SK-N-SH (cell line): ENCODE measurements at regions of chr14 and their contacts with region 1.

Region 1: DNA sequence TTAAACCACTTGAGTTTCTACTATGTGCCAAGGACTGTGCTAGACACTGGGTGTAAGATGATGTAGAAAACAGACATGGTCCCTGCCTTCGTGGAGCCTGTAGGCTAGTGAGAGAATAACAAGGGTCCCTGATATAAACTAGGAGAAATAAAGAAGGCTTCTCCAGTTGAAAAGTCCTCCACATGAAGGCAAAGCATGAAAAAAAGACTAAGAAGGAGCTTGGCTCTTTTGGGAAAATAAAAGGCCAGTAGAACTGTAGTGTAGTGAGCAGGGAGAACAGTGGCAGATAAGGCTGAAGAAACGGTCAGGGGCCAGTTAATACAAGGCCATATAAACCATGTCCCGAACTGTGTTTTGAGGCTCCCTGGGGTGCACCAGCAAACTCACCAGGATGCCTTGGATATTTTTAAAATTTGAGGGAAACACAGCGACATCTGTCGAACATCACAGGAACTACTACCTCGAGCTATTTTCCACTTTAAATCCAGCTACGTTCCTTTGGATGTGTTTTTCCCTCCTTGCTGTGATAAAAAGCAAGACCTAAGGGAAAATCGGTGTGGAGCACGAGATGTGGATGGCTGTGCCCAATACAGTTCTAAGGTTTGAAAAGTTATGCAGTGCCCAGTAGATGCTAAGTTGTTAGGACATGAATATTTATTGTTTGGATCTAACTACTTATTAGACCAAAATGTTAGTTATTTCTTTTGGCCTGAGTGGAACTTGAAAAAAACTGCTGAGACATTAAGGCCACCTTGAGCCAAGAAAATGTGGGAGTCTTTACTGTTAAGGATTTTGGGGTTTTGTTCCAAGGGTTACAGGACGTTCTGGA is 8.5 kb upstream of the CFL2 start:
- DNase-seq: peak; percentile 74
- H3K4me3 ChIP-seq: peak overlapping the region in 1 of 2 experiments; percentile 15; a peak in 1 of 4 replicates
- H3K27ac ChIP-seq: no peak overlapping the region
- H3K4me1 ChIP-seq: peaks cover 0 to 5% of the 10 kb centered on the region in 2 experiments; a peak in 2 of 4 replicates
- H3K27me3 ChIP-seq: no peaks in the 10 kb centered on the region
- CTCF ChIP-seq: peak; percentile 77
- EP300 ChIP-seq: no peak
- RAD21 ChIP-seq: peak; percentile 81

Region 2: DNA sequence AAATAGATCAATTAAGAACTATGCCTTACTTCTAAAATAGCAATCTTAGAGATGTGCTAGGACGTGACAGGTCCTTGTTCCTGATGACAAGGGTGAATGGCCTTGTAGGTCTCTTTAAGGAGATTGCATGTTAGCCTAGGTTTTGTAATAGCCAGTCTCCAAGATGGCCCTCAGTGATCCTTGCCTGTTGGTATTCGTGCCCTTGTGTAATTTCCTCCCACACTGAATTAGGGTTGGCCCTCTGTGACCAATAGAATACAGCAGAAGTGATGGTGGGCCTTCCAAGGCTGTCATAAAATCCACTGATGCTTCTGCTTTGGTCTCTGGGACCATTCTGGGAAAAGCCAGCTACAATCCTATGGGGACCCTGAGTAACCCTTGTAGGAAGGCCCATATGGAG is 54.8 kb before region 1 on chr14:
- CTCF ChIA-PET with region 1: interaction called, 107 read pairs
- POLR2A ChIA-PET with region 1: no interaction called
- DNase-seq: no peak
- H3K4me3 ChIP-seq: no peak overlapping the region
- H3K27ac ChIP-seq: no peak overlapping the region
- H3K4me1 ChIP-seq: peaks cover 0 to 19% of the 10 kb centered on the region in 2 experiments; a peak in 3 of 4 replicates
- H3K27me3 ChIP-seq: no peaks in the 10 kb centered on the region
- CTCF ChIP-seq: no peak
- EP300 ChIP-seq: no peak
- RAD21 ChIP-seq: no peak

Region 3: DNA sequence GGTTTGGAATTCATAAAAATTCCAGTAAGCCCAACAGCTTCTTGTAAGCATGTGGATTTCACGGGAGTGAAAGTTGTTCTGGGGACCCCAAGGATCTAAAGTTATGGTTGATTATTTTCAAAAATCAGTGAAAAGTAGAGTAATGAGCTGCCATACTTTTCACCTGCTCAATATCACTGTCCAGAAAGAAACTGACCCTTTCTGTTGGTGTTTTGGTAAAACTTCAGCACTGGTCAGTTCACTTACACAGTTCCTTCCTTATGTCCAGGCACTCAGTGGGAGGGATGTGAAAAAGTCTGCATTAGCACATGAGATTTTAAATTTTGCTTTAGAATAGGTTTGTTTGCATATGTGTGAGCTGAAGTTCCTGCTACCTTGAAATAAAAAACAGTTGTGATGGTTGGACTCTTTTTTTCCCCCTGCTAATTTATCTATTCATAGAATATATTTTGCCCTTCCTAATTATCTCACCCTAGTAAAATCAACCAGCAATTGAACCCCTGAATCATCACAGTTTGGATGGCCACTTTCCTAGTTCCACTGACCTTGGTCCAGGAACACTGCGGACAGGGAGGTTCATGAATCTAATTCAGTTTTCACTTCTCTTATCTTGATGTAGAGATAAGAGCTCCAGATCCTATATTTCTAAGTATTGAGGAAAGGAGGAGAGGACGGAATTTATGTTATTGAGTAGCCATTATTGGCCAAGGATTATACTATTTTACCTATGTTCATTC is 34.3 kb before region 1 on chr14:
- CTCF ChIA-PET with region 1: interaction called, 24 read pairs
- POLR2A ChIA-PET with region 1: interaction called, 4 read pairs
- DNase-seq: no peak
- H3K4me3 ChIP-seq: no peak overlapping the region
- H3K27ac ChIP-seq: no peak overlapping the region
- H3K4me1 ChIP-seq: 0 out of 4 replicates have a peak, but pooled peaks cover 0 to under 1% of the 10 kb centered on the region in 2 experiments
- H3K27me3 ChIP-seq: no peaks in the 10 kb centered on the region
- CTCF ChIP-seq: no peak
- EP300 ChIP-seq: no peak
- RAD21 ChIP-seq: no peak

Region 4: GRCh38 chr14:34707722-34708121 is 15.2 kb before region 1 on chr14:
- CTCF ChIA-PET with region 1: interaction called, 56 read pairs
- POLR2A ChIA-PET with region 1: no interaction called
- DNase-seq: no peak
- H3K4me3 ChIP-seq: no peak overlapping the region
- H3K27ac ChIP-seq: 0 out of 4 replicates have a peak overlapping the region, but pooled peaks of 1 of the 2 experiments have one; percentile 19
- H3K4me1 ChIP-seq: peaks cover 22 to 24% of the 10 kb centered on the region in 2 experiments; a peak in 3 of 4 replicates
- H3K27me3 ChIP-seq: no peaks in the 10 kb centered on the region
- CTCF ChIP-seq: no peak
- EP300 ChIP-seq: no peak
- RAD21 ChIP-seq: no peak

Region 5: DNA sequence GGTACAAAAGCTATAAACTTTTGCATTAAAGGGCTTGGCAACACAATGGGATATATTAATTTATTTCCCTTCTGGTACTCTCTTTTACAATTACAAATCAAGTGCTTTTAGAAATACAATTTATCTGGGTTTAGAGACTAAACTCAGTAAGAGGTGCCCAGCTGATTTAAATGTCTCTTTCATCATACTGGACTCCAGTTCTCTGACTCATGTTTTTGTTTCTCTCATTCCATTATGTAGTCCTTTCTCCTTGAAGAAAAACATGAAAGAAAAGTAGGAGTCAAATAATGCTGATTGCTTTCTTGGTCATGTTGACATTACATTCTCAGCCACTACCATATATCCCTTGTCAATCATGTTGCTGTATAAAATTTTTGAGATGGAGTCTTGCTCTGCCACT is 27.7 kb after region 1 on chr14:
- CTCF ChIA-PET with region 1: interaction called, 14 read pairs
- POLR2A ChIA-PET with region 1: no interaction called
- DNase-seq: no peak
- H3K4me3 ChIP-seq: no peak overlapping the region
- H3K27ac ChIP-seq: peak overlapping the region in 1 of 2 experiments; percentile 53; a peak in 2 of 4 replicates
- H3K4me1 ChIP-seq: no peaks in the 10 kb centered on the region
- H3K27me3 ChIP-seq: no peaks in the 10 kb centered on the region
- CTCF ChIP-seq: no peak
- EP300 ChIP-seq: no peak
- RAD21 ChIP-seq: no peak